ENCODE measurements at regions of chr9 and their contacts with region 1.

Region 1: GRCh38 chr9:21770877-21771560 is 31.4 kb upstream of the MTAP start:
- DNase-seq: peak; percentile 83
- H3K4me3 ChIP-seq: no peak overlapping the region
- H3K27ac ChIP-seq: peak overlapping the region; percentile 84
- H3K4me1 ChIP-seq: peaks cover 18% of the 10 kb centered on the region
- H3K27me3 ChIP-seq: no peaks in the 10 kb centered on the region
- CTCF ChIP-seq: no peak

Region 2: GRCh38 chr9:21741151-21741550 is 29.9 kb before region 1 on chr9:
- CTCF ChIA-PET with region 1: no interaction called
- dilution Hi-C with region 1: loop called (anchors 5 kb)
- in situ Hi-C with region 1: no loop called
- intact Hi-C with region 1: no loop called
- DNase-seq: no peak
- H3K4me3 ChIP-seq: no peak overlapping the region
- H3K27ac ChIP-seq: no peak overlapping the region
- H3K4me1 ChIP-seq: peaks cover 21% of the 10 kb centered on the region
- H3K27me3 ChIP-seq: no peaks in the 10 kb centered on the region
- CTCF ChIP-seq: no peak

Region 3: GRCh38 chr9:21933865-21934264 is 162.8 kb after region 1 on chr9:
- CTCF ChIA-PET with region 1: no interaction called
- dilution Hi-C with region 1: no loop called
- in situ Hi-C with region 1: no loop called
- intact Hi-C with region 1: no loop called
- DNase-seq: peak; percentile 55
- H3K4me3 ChIP-seq: no peak overlapping the region
- H3K27ac ChIP-seq: no peak overlapping the region
- H3K4me1 ChIP-seq: peaks cover 21% of the 10 kb centered on the region
- H3K27me3 ChIP-seq: no peaks in the 10 kb centered on the region
- CTCF ChIP-seq: no peak

Measured in mammary epithelial cell (primary cell).